ENCODE measurements at regions of chr2 and their contacts with region 1.

Region 1: GRCh38 chr2:178891265-178891958 is 84.2 kb upstream of the TTN start:
- DNase-seq: peak; percentile 16 to 54 (median 24)
- H3K4me3 ChIP-seq: no peak overlapping the region
- H3K4me3 Mint-ChIP-seq: no peak overlapping the region
- H3K27ac ChIP-seq: no peak overlapping the region
- H3K27ac Mint-ChIP-seq: no peak overlapping the region
- H3K4me1 ChIP-seq: no peaks in the 10 kb centered on the region
- H3K4me1 Mint-ChIP-seq: no peaks in the 10 kb centered on the region
- H3K27me3 ChIP-seq: no peaks in the 10 kb centered on the region
- H3K27me3 Mint-ChIP-seq: peaks cover 0 to 3% of the 10 kb centered on the region in 2 donors

Region 2: DNA sequence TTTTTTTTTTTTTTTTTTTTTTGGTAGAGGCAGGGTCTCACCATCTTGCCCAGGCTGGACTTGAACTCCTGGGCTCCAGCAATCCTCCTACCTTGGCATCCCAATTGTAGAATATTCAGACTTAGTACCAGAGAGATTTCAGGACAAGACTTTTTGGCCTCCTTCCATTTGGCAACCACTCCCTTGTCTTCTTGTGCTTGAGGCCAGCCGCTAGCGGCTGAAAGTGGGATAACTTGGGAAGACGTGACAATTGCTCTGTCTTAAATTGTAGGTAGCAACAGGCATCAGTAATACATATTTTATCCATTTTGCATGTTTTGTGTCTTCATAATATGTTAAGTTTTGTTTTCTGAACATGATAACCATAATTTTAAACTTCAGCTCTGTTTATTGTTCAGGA is 30.9 kb before region 1 on chr2:
- CTCF ChIA-PET with region 1: no interaction called
- POLR2A ChIA-PET with region 1: no interaction called
- DNase-seq: no peak
- H3K4me3 ChIP-seq: no peak overlapping the region
- H3K4me3 Mint-ChIP-seq: no peak overlapping the region
- H3K27ac ChIP-seq: no peak overlapping the region
- H3K27ac Mint-ChIP-seq: no peak overlapping the region
- H3K4me1 ChIP-seq: no peaks in the 10 kb centered on the region
- H3K4me1 Mint-ChIP-seq: no peaks in the 10 kb centered on the region
- H3K27me3 ChIP-seq: no peaks in the 10 kb centered on the region
- H3K27me3 Mint-ChIP-seq: no peaks in the 10 kb centered on the region

Region 3: DNA sequence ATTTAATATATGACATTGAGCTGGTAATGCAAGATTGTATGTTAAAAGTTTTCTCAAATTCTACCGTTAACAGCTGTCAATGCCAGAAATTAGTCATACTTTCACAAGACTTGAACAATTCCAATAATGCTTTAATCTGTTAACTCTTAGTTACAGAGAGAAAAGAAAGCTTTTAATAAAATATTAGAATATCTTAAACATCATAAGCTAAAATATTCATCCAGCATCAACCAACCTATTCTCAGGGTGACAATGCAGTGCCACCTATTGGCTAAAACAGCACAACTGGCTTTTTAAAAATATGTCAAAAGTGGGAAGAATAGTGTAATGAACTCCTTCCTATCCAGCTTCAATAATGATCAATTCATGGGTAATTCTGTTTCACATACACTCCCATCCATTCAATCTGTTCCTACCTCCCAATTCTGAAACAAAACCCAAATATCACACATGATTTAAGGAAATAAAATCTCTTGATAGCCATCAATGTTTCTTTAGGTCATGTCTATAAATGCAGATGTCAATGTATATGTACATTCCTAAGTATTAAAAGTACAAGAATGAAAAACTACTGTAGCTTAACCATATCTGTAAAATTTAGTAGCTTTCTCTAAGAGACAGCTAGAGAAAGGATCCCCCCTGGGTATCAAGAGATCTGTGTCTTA is 238.3 kb after region 1 on chr2:
- CTCF ChIA-PET with region 1: interaction called, 13 read pairs
- POLR2A ChIA-PET with region 1: no interaction called
- DNase-seq: peak in 2 of 5 donors; percentile 7 to 22
- H3K4me3 ChIP-seq: no peak overlapping the region
- H3K4me3 Mint-ChIP-seq: no peak overlapping the region
- H3K27ac ChIP-seq: no peak overlapping the region
- H3K27ac Mint-ChIP-seq: no peak overlapping the region
- H3K4me1 ChIP-seq: no peaks in the 10 kb centered on the region
- H3K4me1 Mint-ChIP-seq: no peaks in the 10 kb centered on the region
- H3K27me3 ChIP-seq: no peaks in the 10 kb centered on the region
- H3K27me3 Mint-ChIP-seq: no peaks in the 10 kb centered on the region